MCF 10A (cell line): ENCODE measurements at regions of chr13 and their contacts with region 1.

Region 1: GRCh38 chr13:38763439-38764381 is 76.8 kb downstream of the FREM2 start:
- DNase-seq: peak; percentile 58
- H3K4me3 Mint-ChIP-seq: no peak overlapping the region
- H3K27ac Mint-ChIP-seq: no peak overlapping the region
- H3K4me1 Mint-ChIP-seq: no peaks in the 10 kb centered on the region
- H3K27me3 Mint-ChIP-seq: peaks cover 29% of the 10 kb centered on the region
- CTCF ChIP-seq: peak; percentile 53

Region 2: GRCh38 chr13:37769078-37769477 is 994.6 kb before region 1 on chr13:
- CTCF ChIA-PET with region 1: no interaction called
- POLR2A ChIA-PET with region 1: no interaction called
- intact Hi-C with region 1: loop called (anchors 5 kb)
- DNase-seq: peak; percentile 23
- H3K4me3 Mint-ChIP-seq: no peak overlapping the region
- H3K27ac Mint-ChIP-seq: no peak overlapping the region
- H3K4me1 Mint-ChIP-seq: no peaks in the 10 kb centered on the region
- H3K27me3 Mint-ChIP-seq: peaks cover 13% of the 10 kb centered on the region
- CTCF ChIP-seq: peak; percentile 25

Region 3: DNA sequence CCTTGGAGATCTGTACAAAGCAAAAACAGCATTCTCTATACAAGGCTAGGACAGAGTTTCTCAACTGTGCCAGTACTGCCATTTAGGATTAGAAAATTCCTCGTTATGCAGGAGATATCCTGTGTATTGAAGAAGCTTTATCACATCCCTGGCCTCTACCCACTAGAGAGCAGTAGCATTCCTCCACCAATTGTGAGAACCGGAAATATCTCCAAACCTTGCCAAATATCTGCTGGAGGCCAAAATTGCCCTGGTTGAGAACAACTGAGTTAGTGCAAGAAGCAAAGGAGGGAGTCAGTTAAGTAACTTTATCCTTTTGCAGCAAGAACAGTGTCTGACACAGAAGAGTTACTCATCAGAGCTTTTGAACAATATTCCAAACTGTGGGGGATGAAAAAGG is 93.1 kb before region 1 on chr13:
- CTCF ChIA-PET with region 1: interaction called, 24 read pairs
- POLR2A ChIA-PET with region 1: interaction called, 3 read pairs
- intact Hi-C with region 1: no loop called
- DNase-seq: peak; percentile 75
- H3K4me3 Mint-ChIP-seq: no peak overlapping the region
- H3K27ac Mint-ChIP-seq: no peak overlapping the region
- H3K4me1 Mint-ChIP-seq: no peaks in the 10 kb centered on the region
- H3K27me3 Mint-ChIP-seq: peaks cover 52% of the 10 kb centered on the region
- CTCF ChIP-seq: no peak

Region 4: GRCh38 chr13:38680912-38681311 is 82.8 kb before region 1 on chr13:
- CTCF ChIA-PET with region 1: interaction called, 119 read pairs
- POLR2A ChIA-PET with region 1: interaction called, 8 read pairs
- intact Hi-C with region 1: loop called (anchors 2 kb)
- DNase-seq: no peak
- H3K4me3 Mint-ChIP-seq: no peak overlapping the region
- H3K27ac Mint-ChIP-seq: no peak overlapping the region
- H3K4me1 Mint-ChIP-seq: peaks cover 2% of the 10 kb centered on the region
- H3K27me3 Mint-ChIP-seq: peaks cover 19% of the 10 kb centered on the region
- CTCF ChIP-seq: no peak

Region 5: DNA sequence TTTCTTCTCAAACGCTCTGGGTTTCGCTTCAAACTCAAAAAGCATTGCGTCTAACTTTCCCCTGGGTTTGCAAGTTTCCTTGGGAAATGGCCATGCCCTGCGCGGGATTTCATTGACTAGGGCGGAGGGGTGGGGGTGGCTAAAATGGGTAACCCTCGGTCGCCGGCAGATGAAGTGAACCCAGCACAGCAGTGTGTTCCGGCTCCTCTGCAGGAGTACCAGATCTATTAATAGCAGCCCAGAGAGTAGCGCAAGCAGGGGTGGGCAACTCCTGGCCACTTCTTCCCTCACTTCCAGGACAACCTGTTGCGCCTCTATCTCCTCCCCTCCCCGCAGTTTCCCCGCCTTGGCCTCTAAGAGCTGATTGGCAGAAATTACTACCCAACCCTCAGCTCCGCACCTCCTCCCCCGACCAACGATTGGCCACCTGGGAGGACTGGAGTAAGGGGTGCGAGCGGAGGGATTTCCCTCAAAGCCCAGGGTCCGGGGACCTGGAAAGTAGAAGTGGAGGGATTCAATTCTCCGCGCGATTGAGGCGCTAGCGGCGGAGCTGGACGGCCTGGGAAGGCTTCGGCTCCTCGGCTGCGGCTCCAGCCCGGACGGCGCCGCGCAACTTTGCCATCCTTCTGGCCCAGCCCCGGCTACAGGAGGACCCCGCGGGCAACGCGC is 77.0 kb before region 1 on chr13 and contains the start of gene FREM2:
- CTCF ChIA-PET with region 1: interaction called, 119 read pairs
- POLR2A ChIA-PET with region 1: interaction called, 8 read pairs
- intact Hi-C with region 1: loop called (anchors 2 kb)
- DNase-seq: peak; percentile 73
- H3K4me3 Mint-ChIP-seq: peak within 1 kb of the TSS; percentile 71
- H3K27ac Mint-ChIP-seq: no peak within 1 kb of the TSS
- H3K4me1 Mint-ChIP-seq: peaks cover 7% of the 10 kb centered on the region
- H3K27me3 Mint-ChIP-seq: no peaks in the 10 kb centered on the region
- CTCF ChIP-seq: no peak
- total RNA-seq, gene FREM2: not detected in 2 replicates

Region 6: DNA sequence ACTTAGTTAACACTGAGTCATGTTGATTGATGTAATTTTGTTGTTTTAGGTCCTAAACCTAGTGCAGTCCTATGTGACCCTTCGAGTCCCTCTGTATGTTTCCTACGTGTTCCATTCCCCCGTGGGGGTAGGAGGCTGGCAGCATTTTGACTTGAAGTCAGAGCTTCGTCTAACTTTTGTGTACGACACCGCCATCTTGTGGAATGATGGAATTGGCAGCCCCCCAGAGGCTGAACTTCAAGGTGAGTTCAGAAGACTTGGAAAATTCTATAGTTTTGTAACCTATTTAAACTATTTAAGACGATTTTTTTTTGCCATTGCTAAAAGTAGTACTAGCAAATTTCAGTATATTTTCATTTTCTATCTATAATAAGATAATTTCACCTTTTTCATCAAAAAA is 109.0 kb after region 1 on chr13:
- CTCF ChIA-PET with region 1: interaction called, 10 read pairs
- POLR2A ChIA-PET with region 1: no interaction called
- intact Hi-C with region 1: no loop called
- DNase-seq: peak; percentile 68
- H3K4me3 Mint-ChIP-seq: no peak overlapping the region
- H3K27ac Mint-ChIP-seq: no peak overlapping the region
- H3K4me1 Mint-ChIP-seq: no peaks in the 10 kb centered on the region
- H3K27me3 Mint-ChIP-seq: peaks cover 70% of the 10 kb centered on the region
- CTCF ChIP-seq: peak; percentile 49

Region 7: GRCh38 chr13:38914070-38914469 is 150.4 kb after region 1 on chr13:
- CTCF ChIA-PET with region 1: interaction called, 6 read pairs
- POLR2A ChIA-PET with region 1: no interaction called
- intact Hi-C with region 1: loop called (anchors 10 kb)
- DNase-seq: no peak
- H3K4me3 Mint-ChIP-seq: no peak overlapping the region
- H3K27ac Mint-ChIP-seq: no peak overlapping the region
- H3K4me1 Mint-ChIP-seq: no peaks in the 10 kb centered on the region
- H3K27me3 Mint-ChIP-seq: peaks cover 38% of the 10 kb centered on the region
- CTCF ChIP-seq: no peak